Activated CD4-positive, alpha-beta memory T cell treated with anti-CD3 and anti-CD28 coated beads for 36 hours (primary cell): ENCODE measurements at regions of chr20 and their contacts with region 1.

Region 1: DNA sequence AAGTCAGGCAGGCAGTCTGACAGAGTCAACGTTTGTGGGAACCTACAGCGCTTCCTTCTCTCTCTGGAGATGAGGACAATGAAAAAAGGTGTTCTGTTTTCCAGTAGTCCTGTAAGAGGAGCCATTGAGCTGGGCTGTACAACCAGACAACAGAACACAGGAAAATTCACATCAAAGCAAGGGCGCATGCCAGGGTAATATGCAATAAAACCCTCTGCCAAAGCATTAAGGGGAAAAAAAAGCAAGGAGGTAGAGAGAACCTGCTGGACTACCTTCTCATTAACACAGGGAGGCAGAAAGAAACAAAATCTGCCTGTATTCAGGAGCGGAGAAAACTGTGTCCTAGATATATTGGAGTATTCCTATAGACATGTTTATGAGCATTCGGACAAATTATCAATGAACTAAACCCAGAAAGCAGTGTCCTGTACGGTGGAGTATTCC is 1.3 kb downstream of the RNF24 start:
- DNase-seq: peak; percentile 28
- H3K4me3 Mint-ChIP-seq: peak overlapping the region; percentile 86
- H3K27ac Mint-ChIP-seq: no peak overlapping the region
- H3K4me1 Mint-ChIP-seq: peaks cover 36% of the 10 kb centered on the region
- H3K27me3 Mint-ChIP-seq: no peaks in the 10 kb centered on the region

Region 2: GRCh38 chr20:3888622-3889488 is 125.2 kb before region 1 on chr20 and contains the start of gene PANK2:
- CTCF ChIA-PET with region 1: interaction called, 3 read pairs
- POLR2A ChIA-PET with region 1: no interaction called
- intact Hi-C with region 1: loop called (anchors 2 kb)
- DNase-seq: peak; percentile 99
- H3K4me3 Mint-ChIP-seq: peak within 1 kb of the TSS; percentile 92
- H3K27ac Mint-ChIP-seq: peak within 1 kb of the TSS; percentile 97
- H3K4me1 Mint-ChIP-seq: peaks cover 40% of the 10 kb centered on the region
- H3K27me3 Mint-ChIP-seq: no peaks in the 10 kb centered on the region
- total RNA-seq, gene PANK2: 49.3 to 52.5 TPM

Region 3: DNA sequence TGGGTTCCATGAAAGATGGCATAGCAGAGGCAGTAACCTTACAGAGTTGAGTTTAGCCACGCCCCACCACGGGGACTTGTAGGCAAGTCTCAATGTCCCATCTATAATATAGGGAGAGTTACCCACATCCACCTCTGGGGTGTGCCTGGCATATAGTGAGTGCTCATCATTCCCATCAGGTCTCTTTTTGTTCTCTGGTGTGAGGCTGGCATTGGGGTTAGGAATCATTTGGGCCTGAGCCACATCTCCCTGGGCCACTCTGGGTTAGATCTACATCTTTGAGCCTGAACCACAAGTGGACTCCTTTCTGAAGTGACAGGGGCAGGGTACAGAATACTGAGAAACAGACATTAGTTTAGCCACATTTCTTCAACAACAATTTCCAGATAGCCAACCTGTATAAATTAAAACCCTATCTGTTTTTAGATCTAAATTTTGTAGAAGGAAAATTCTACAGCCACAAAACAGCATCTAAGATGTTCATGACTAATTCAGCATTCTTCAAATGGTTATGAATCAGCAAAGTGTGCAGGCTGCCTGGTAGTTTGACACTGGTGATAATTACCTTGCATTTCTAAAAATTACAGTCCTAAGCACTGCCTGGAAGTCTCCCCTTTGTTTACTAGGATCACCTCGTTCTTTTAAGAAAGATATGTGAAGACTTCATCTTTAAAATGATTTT is 18.8 kb before region 1 on chr20:
- CTCF ChIA-PET with region 1: interaction called, 6 read pairs
- POLR2A ChIA-PET with region 1: no interaction called
- intact Hi-C with region 1: loop called (anchors 1 kb)
- DNase-seq: peak; percentile 50
- H3K4me3 Mint-ChIP-seq: peak overlapping the region; percentile 42
- H3K27ac Mint-ChIP-seq: peak overlapping the region; percentile 84
- H3K4me1 Mint-ChIP-seq: peaks cover 51% of the 10 kb centered on the region
- H3K27me3 Mint-ChIP-seq: no peaks in the 10 kb centered on the region

Region 4: GRCh38 chr20:4038047-4038459 is 24.0 kb after region 1 on chr20:
- CTCF ChIA-PET with region 1: no interaction called
- POLR2A ChIA-PET with region 1: no interaction called
- intact Hi-C with region 1: loop called (anchors 1 kb)
- DNase-seq: peak; percentile 89
- H3K4me3 Mint-ChIP-seq: peak overlapping the region; percentile 70
- H3K27ac Mint-ChIP-seq: peak overlapping the region; percentile 89
- H3K4me1 Mint-ChIP-seq: peaks cover 18% of the 10 kb centered on the region
- H3K27me3 Mint-ChIP-seq: no peaks in the 10 kb centered on the region

Region 5: GRCh38 chr20:4297127-4297826 is 283.2 kb after region 1 on chr20:
- CTCF ChIA-PET with region 1: no interaction called
- POLR2A ChIA-PET with region 1: no interaction called
- intact Hi-C with region 1: no loop called
- DNase-seq: no peak
- H3K4me3 Mint-ChIP-seq: no peak overlapping the region
- H3K27ac Mint-ChIP-seq: no peak overlapping the region
- H3K4me1 Mint-ChIP-seq: no peaks in the 10 kb centered on the region
- H3K27me3 Mint-ChIP-seq: peaks cover 25% of the 10 kb centered on the region